Colonic mucosa (tissue), 4 donors: ENCODE measurements at regions of chr22 and their contacts with region 1.

Region 1: DNA sequence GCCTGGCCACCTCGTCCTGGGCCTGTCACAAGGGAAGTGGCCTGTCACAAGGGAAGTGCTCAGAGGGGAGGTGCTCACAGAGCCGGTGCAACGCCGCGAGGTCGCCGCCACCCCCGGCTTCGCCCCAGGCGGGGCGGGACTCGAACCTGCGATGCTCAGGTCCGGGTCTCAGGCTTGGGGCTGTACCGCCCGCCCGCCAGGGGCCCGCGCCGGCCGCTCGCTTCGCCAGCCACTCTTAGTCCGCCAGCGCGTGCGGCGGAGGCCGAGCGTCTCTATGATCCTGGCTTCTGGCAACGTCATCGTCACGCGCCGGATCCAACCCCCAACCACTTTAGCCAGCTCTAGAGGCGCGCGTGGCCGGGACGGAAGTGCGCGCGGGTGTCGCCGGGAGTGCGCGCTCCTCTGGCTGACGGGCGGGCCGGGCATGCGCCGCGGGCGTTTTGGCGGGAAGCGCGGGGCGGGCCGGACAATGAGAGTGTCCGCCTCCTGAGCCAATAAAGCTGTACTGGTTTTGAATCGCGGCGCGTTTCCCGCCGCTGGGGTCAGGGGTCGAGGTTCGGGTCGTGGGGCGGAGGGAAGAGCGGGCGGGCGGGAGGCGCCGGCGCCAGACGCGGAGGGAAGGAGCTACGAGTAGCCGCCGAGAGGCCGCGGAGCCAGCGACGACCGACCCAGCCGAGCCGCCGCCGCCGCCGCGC is at the start of gene TRMT2A:
- DNase-seq: peak; percentile 97
- H3K4me3 ChIP-seq: peak within 1 kb of the TSS; percentile 89
- H3K27ac ChIP-seq: peak within 1 kb of the TSS; percentile 74
- H3K4me1 ChIP-seq: peaks cover 7% of the 10 kb centered on the region
- H3K27me3 ChIP-seq: no peaks in the 10 kb centered on the region
- CTCF ChIP-seq: no peak
- total RNA-seq, gene TRMT2A: 31.9 to 63.6 TPM

Region 2: GRCh38 chr22:19962233-19962908 is 154.7 kb before region 1 on chr22:
- intact Hi-C with region 1: loop called (anchors 10 kb)
- DNase-seq: peak; percentile 91
- H3K4me3 ChIP-seq: peak overlapping the region; percentile 18
- H3K27ac ChIP-seq: peak overlapping the region; percentile 83
- H3K4me1 ChIP-seq: peaks cover 16% of the 10 kb centered on the region
- H3K27me3 ChIP-seq: no peaks in the 10 kb centered on the region
- CTCF ChIP-seq: peak; percentile 58

Region 3: DNA sequence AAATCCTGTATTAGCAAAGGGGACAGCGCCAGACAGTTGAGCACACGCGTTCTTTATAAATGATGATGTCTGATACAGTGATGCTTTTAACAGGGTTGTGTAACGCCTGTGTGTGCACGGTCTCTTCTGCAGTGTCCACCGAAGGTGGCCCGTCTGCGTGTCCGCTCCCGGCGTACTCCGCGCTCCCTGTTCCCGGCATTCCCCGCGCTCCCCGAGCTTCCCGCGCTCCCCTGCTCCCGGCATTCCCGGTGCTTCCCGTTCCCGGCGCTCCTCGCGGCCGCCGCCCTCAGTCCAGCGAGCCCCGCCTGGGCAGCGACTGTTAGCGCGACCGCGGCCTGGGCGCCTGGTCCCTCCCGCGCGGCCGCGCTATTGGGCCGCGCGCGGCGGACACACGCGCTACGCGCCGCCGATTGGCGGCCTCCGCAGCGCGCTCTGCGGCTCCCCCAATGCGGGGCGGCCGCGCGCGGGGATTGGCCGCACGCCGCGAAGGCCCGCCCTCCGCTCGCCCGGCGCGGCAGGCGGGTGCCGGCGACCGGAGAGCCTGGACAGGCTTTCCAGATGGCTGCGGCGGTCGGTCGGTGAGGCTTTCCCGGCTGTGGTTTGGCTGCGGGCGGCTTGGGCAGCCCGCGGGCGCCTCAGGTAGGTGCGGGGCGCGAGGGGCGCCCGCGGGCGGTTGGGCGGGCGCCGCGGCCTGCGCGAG is 37.2 kb before region 1 on chr22 and contains the start of gene DGCR8:
- intact Hi-C with region 1: loop called (anchors 5 kb)
- DNase-seq: peak; percentile 96
- H3K4me3 ChIP-seq: peak within 1 kb of the TSS; percentile 87
- H3K27ac ChIP-seq: peak within 1 kb of the TSS; percentile 91
- H3K4me1 ChIP-seq: peaks cover 5% of the 10 kb centered on the region
- H3K27me3 ChIP-seq: no peaks in the 10 kb centered on the region
- CTCF ChIP-seq: no peak
- total RNA-seq, gene DGCR8: 21.1 to 52.7 TPM

Region 4: GRCh38 chr22:20156611-20157429 is 39.7 kb after region 1 on chr22:
- intact Hi-C with region 1: no loop called
- DNase-seq: peak; percentile 86
- H3K4me3 ChIP-seq: no peak overlapping the region
- H3K27ac ChIP-seq: no peak overlapping the region
- H3K4me1 ChIP-seq: no peaks in the 10 kb centered on the region
- H3K27me3 ChIP-seq: no peaks in the 10 kb centered on the region
- CTCF ChIP-seq: peak; percentile 100